ENCODE measurements at regions of chr2 and their contacts with region 1.

Region 1: GRCh38 chr2:102615622-102616436 is 3.5 kb upstream of the SLC9A2 start:
- DNase-seq: peak; percentile 85
- H3K4me3 ChIP-seq: no peak overlapping the region
- H3K27ac ChIP-seq: no peak overlapping the region
- H3K4me1 ChIP-seq: no peaks in the 10 kb centered on the region; the same call in 1 of the 2 replicates
- H3K27me3 ChIP-seq: peaks cover 79% of the 10 kb centered on the region

Region 2: GRCh38 chr2:102235491-102235890 is 380.3 kb before region 1 on chr2:
- in situ Hi-C with region 1: no loop called
- DNase-seq: peak; percentile 52
- H3K4me3 ChIP-seq: no peak overlapping the region
- H3K27ac ChIP-seq: no peak overlapping the region
- H3K4me1 ChIP-seq: peaks cover 21% of the 10 kb centered on the region
- H3K27me3 ChIP-seq: no peaks in the 10 kb centered on the region

Region 3: GRCh38 chr2:102251042-102251848 is 364.6 kb before region 1 on chr2:
- in situ Hi-C with region 1: loop called (anchors 25 kb)
- DNase-seq: peak; percentile 84
- H3K4me3 ChIP-seq: peak overlapping the region; percentile 73
- H3K27ac ChIP-seq: no peak overlapping the region
- H3K4me1 ChIP-seq: peaks cover 1% of the 10 kb centered on the region
- H3K27me3 ChIP-seq: no peaks in the 10 kb centered on the region

Region 4: GRCh38 chr2:102460467-102460866 is 155.4 kb before region 1 on chr2:
- in situ Hi-C with region 1: loop called (anchors 10 kb)
- DNase-seq: no peak
- H3K4me3 ChIP-seq: no peak overlapping the region
- H3K27ac ChIP-seq: no peak overlapping the region
- H3K4me1 ChIP-seq: no peaks in the 10 kb centered on the region
- H3K27me3 ChIP-seq: peaks cover 26% of the 10 kb centered on the region; the same call in 1 of the 2 replicates

Region 5: GRCh38 chr2:103110234-103110633 is 494.4 kb after region 1 on chr2:
- in situ Hi-C with region 1: no loop called
- DNase-seq: no peak
- H3K4me3 ChIP-seq: no peak overlapping the region
- H3K27ac ChIP-seq: no peak overlapping the region
- H3K4me1 ChIP-seq: no peaks in the 10 kb centered on the region
- H3K27me3 ChIP-seq: no peaks in the 10 kb centered on the region

Measured in GM23248 (cell line).